Sigmoid colon (tissue), 7 donors: ENCODE measurements at regions of chr13 and their contacts with region 1.

Region 1: DNA sequence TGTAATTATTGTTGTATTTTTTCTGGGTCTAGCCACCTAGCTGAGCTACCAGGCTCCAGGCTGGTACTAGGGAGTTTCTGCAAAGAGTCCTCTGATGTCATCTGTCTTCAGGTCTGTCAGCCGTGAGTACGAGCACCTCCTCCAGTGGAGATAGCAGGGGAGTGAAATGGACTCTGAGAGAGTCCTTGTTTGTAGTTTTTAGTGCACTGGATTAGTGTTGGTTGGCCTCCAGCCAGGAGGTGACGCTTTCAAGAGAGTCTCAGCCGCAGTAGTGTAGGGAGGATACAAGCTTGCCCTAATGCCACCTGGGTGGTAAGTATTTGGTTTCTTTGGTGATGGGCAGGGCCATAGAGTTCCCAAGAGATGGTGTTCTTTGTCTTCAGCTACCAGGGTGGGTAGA is 384.8 kb downstream of the SLC7A1 start:
- DNase-seq: no peak
- H3K4me3 ChIP-seq: no peak overlapping the region
- H3K27ac ChIP-seq: no peak overlapping the region
- H3K4me1 ChIP-seq: no peaks in the 10 kb centered on the region
- H3K27me3 ChIP-seq: no peaks in the 10 kb centered on the region
- CTCF ChIP-seq: no peak
- EP300 ChIP-seq: no peak
- POLR2A ChIP-seq: no peak

Region 2: DNA sequence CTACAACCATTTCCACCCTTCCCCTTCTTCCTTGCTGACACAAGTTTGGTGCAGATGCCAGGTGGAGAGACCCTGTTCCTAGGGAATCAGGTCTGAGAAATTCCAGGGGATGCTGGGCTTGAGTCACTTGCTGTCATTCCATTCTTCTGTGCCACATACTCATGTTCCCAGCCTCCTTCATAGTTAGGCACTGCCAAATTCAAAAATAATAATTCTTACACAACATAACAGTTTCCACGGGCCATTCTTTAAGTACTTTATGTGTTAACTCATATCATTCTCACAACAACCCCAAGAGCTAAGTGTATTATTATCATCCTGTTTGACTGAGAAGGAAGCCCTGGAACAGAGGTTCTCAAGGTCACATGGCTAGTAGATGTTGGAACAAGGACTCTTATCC is 578.9 kb before region 1 on chr13:
- intact Hi-C with region 1: no loop called
- DNase-seq: no peak
- H3K4me3 ChIP-seq: no peak overlapping the region
- H3K27ac ChIP-seq: no peak overlapping the region
- H3K4me1 ChIP-seq: no peaks in the 10 kb centered on the region
- H3K27me3 ChIP-seq: no peaks in the 10 kb centered on the region
- CTCF ChIP-seq: no peak
- EP300 ChIP-seq: no peak
- POLR2A ChIP-seq: no peak

Region 3: GRCh38 chr13:28843639-28844038 is 367.0 kb before region 1 on chr13:
- intact Hi-C with region 1: no loop called
- DNase-seq: no peak
- H3K4me3 ChIP-seq: no peak overlapping the region
- H3K27ac ChIP-seq: no peak overlapping the region
- H3K4me1 ChIP-seq: no peaks in the 10 kb centered on the region
- H3K27me3 ChIP-seq: no peaks in the 10 kb centered on the region
- CTCF ChIP-seq: no peak
- EP300 ChIP-seq: no peak
- POLR2A ChIP-seq: no peak

Region 4: GRCh38 chr13:28983641-28984040 is 227.0 kb before region 1 on chr13:
- intact Hi-C with region 1: no loop called
- DNase-seq: no peak
- H3K4me3 ChIP-seq: no peak overlapping the region
- H3K27ac ChIP-seq: no peak overlapping the region
- H3K4me1 ChIP-seq: no peaks in the 10 kb centered on the region
- H3K27me3 ChIP-seq: no peaks in the 10 kb centered on the region
- CTCF ChIP-seq: no peak
- EP300 ChIP-seq: no peak
- POLR2A ChIP-seq: no peak

Region 5: GRCh38 chr13:29354377-29354776 is 143.7 kb after region 1 on chr13:
- intact Hi-C with region 1: loop called (anchors 5 kb)
- DNase-seq: no peak
- H3K4me3 ChIP-seq: no peak overlapping the region
- H3K27ac ChIP-seq: no peak overlapping the region
- H3K4me1 ChIP-seq: no peaks in the 10 kb centered on the region
- H3K27me3 ChIP-seq: no peaks in the 10 kb centered on the region
- CTCF ChIP-seq: no peak
- EP300 ChIP-seq: no peak
- POLR2A ChIP-seq: no peak

Region 6: GRCh38 chr13:29648760-29649159 is 438.1 kb after region 1 on chr13:
- intact Hi-C with region 1: no loop called
- DNase-seq: no peak
- H3K4me3 ChIP-seq: no peak overlapping the region
- H3K27ac ChIP-seq: no peak overlapping the region
- H3K4me1 ChIP-seq: no peaks in the 10 kb centered on the region
- H3K27me3 ChIP-seq: no peaks in the 10 kb centered on the region
- CTCF ChIP-seq: no peak
- EP300 ChIP-seq: no peak
- POLR2A ChIP-seq: no peak